PC-9 (cell line): ENCODE measurements at regions of chr6 and their contacts with region 1.

Region 1: GRCh38 chr6:134002821-134003220 is 49.6 kb downstream of the SLC2A12 start:
- DNase-seq: no peak
- H3K4me3 ChIP-seq: no peak overlapping the region
- H3K27ac ChIP-seq: no peak overlapping the region
- H3K4me1 ChIP-seq: peaks cover 47% of the 10 kb centered on the region
- H3K27me3 ChIP-seq: no peaks in the 10 kb centered on the region
- CTCF ChIP-seq: no peak

Region 2: DNA sequence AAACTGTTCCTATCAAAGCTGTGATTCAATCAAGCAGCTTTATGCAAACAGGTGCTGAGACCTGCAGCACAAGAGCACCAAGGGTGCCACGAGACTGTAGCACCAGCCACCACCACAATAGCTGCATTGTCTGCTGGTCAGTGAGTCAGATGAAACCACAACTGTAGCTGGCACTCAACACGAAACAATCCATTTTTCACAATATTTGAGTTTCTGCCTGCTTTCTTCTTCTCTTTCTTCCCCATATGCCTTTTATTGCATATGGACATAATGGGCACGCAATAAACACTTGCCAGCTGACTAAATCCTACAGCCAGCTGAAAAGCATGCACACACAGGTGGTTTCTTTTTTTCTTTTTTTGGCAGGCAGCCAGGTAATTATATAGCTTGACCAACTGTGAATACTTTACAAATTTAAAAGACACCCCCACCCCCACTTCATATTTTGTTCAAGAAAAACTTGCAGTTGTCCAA is 33.0 kb after region 1 on chr6:
- CTCF ChIA-PET with region 1: no interaction called
- POLR2A ChIA-PET with region 1: no interaction called
- intact Hi-C with region 1: loop called (anchors 5 kb)
- DNase-seq: peak; percentile 64 to 98
- H3K4me3 ChIP-seq: 0 out of 2 replicates have a peak overlapping the region, but pooled peaks have one; percentile 0
- H3K27ac ChIP-seq: peak overlapping the region; percentile 84
- H3K4me1 ChIP-seq: peaks cover 38% of the 10 kb centered on the region
- H3K27me3 ChIP-seq: no peaks in the 10 kb centered on the region
- CTCF ChIP-seq: no peak

Region 3: GRCh38 chr6:134056046-134056445 is 53.2 kb after region 1 on chr6:
- CTCF ChIA-PET with region 1: no interaction called
- POLR2A ChIA-PET with region 1: no interaction called
- intact Hi-C with region 1: loop called (anchors 1 kb)
- DNase-seq: no peak
- H3K4me3 ChIP-seq: no peak overlapping the region
- H3K27ac ChIP-seq: no peak overlapping the region
- H3K4me1 ChIP-seq: peaks cover 24% of the 10 kb centered on the region
- H3K27me3 ChIP-seq: no peaks in the 10 kb centered on the region
- CTCF ChIP-seq: no peak

Region 4: DNA sequence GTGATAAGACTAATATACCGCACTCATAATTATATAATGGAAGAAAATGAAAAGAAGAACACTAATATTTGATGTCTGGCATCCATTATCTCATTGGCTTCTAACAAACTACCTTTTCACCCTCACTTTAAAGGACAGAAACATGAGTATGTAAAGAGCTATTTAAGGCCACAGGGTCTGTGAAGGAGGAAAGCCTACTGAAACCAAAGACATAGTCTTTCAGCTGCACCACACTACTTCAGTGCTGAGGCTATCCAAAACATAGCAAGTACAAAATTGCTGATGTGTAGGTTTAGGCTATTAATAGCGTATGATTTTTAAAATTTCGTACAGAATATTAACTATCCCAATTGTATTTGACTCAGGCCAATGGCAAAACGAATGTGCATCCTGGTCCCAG is 87.8 kb after region 1 on chr6:
- CTCF ChIA-PET with region 1: no interaction called
- POLR2A ChIA-PET with region 1: no interaction called
- intact Hi-C with region 1: no loop called
- DNase-seq: no peak
- H3K4me3 ChIP-seq: no peak overlapping the region
- H3K27ac ChIP-seq: no peak overlapping the region
- H3K4me1 ChIP-seq: peaks cover 11% of the 10 kb centered on the region; the same call in 1 of the 2 replicates
- H3K27me3 ChIP-seq: no peaks in the 10 kb centered on the region
- CTCF ChIP-seq: no peak

Region 5: GRCh38 chr6:134436281-134436815 is 433.5 kb after region 1 on chr6:
- CTCF ChIA-PET with region 1: no interaction called
- POLR2A ChIA-PET with region 1: no interaction called
- intact Hi-C with region 1: no loop called
- DNase-seq: peak; percentile 75 to 96
- H3K4me3 ChIP-seq: peak overlapping the region; percentile 36; the same call in 1 of the 2 replicates
- H3K27ac ChIP-seq: peak overlapping the region; percentile 85
- H3K4me1 ChIP-seq: peaks cover 29% of the 10 kb centered on the region
- H3K27me3 ChIP-seq: no peaks in the 10 kb centered on the region
- CTCF ChIP-seq: no peak